HCT116 (cell line): ENCODE measurements at regions of chr3 and their contacts with region 1.

Region 1: GRCh38 chr3:5304789-5305683 is 117.5 kb downstream of the EDEM1 start:
- DNase-seq: peak; percentile 31
- ATAC-seq: peak; percentile 91
- H3K4me3 ChIP-seq: no peak overlapping the region
- H3K27ac ChIP-seq: no peak overlapping the region
- H3K4me1 ChIP-seq: no peaks in the 10 kb centered on the region
- H3K27me3 ChIP-seq: peaks cover 13% of the 10 kb centered on the region; the same call in 1 of the 2 replicates
- CTCF ChIP-seq: peak; percentile 50 to 85 (median 73); a peak in 5 of 6 replicates
- POLR2A ChIP-seq: no peak
- RAD21 ChIP-seq: peak; percentile 92

Region 2: DNA sequence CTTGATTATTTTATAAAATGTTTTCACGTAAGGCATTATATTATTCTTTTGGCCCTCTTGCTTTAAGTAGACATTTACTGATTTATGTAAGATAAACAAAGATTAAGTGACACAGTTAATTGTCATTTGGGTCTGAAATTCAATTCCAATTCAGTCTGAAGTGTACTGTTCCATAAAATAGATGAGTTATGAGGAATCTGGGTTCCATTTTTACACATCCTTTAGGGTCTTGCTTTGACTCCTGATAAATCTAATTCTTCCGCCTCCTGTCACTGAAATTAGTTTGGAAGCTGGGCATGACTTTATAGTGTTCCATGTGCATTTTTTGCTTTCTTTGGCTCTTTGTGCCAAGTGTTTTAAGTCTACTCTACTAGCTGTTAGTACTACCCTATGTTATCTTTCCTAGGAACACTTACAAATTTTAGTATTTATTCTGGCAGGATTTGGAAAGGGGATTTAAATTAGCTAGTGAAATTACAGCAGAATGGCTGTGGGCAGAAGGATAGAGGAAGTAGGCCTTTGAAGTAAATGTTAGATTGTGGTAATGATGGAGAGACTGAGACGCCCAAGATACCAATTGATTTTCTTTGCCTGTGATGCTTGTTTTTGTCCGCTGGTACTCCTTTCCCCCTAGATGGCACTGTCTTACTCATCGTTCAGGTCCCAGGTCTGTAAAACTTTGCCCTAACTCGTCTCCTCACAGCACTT is 168.7 kb before region 1 on chr3:
- CTCF ChIA-PET with region 1: no interaction called
- POLR2A ChIA-PET with region 1: no interaction called
- RAD21 ChIA-PET with region 1: no interaction called
- intact Hi-C with region 1: no loop called
- DNase-seq: no peak
- ATAC-seq: peak; percentile 81
- H3K4me3 ChIP-seq: no peak overlapping the region
- H3K27ac ChIP-seq: no peak overlapping the region
- H3K4me1 ChIP-seq: peaks cover 3 to 10% of the 10 kb centered on the region in 2 experiments; a peak in 3 of 4 replicates
- H3K27me3 ChIP-seq: no peaks in the 10 kb centered on the region
- CTCF ChIP-seq: peak; percentile 30 to 53 (median 48); a peak in 5 of 6 replicates
- POLR2A ChIP-seq: no peak
- RAD21 ChIP-seq: peak; percentile 62

Region 3: DNA sequence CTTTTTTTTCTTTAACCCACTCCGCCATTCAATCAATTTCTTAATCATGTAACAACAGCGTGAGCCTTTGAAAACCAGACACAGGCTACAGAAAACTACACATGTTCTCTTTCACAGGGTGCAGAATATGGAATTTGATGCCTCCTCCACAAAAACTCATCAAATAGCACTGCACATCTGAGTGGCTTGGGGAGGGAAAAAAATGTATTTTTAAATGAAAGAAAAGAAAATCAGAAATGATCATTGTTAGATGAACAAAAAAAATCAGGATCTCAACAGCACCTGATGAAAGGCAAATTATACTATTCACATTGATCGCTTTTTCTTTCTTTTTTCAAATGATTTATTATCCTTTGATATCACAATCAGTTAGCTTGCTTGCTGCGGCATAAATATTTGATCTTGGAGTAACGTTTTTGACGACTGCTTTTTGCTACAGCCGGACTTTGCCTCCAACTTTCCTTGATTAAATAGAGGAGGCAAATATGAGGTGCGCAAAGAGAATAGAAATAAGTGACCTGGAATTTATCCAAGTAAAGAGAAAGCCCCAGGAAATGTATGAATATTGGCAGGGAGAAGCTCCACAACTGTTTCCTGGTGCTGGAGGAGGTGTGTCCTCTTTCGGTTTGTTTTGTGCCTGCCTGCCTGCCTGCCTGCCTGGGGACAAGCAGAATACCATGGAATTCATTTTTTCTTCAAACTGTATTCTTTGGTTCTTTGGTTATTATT is 54.4 kb before region 1 on chr3:
- CTCF ChIA-PET with region 1: no interaction called
- POLR2A ChIA-PET with region 1: no interaction called
- RAD21 ChIA-PET with region 1: no interaction called
- intact Hi-C with region 1: no loop called
- DNase-seq: no peak
- ATAC-seq: no peak
- H3K4me3 ChIP-seq: no peak overlapping the region
- H3K27ac ChIP-seq: no peak overlapping the region
- H3K4me1 ChIP-seq: no peaks in the 10 kb centered on the region
- H3K27me3 ChIP-seq: no peaks in the 10 kb centered on the region
- CTCF ChIP-seq: no peak
- POLR2A ChIP-seq: no peak
- RAD21 ChIP-seq: no peak

Region 4: DNA sequence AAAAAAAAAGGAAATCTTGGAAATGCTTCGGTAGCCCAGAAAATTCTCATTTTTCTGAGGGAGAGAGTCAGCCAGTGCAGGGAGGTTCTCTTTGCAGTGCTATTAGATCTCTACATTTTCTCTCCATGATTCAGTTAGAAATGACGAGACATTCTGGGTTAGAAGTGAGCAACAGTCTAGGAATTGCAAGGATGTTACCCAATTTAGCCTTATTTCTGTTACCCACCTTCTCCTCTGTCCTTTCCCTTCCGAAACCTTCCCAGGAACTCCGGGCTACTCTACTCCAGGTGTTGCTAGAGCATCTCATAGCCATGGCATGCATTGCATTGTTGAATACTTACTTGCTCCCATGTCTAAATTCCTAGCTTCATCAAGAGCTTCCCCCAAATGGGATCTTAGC is 10.7 kb before region 1 on chr3:
- CTCF ChIA-PET with region 1: no interaction called
- POLR2A ChIA-PET with region 1: no interaction called
- RAD21 ChIA-PET with region 1: no interaction called
- intact Hi-C with region 1: no loop called
- DNase-seq: no peak
- ATAC-seq: no peak
- H3K4me3 ChIP-seq: no peak overlapping the region
- H3K27ac ChIP-seq: no peak overlapping the region
- H3K4me1 ChIP-seq: no peaks in the 10 kb centered on the region
- H3K27me3 ChIP-seq: no peaks in the 10 kb centered on the region
- CTCF ChIP-seq: no peak
- POLR2A ChIP-seq: no peak
- RAD21 ChIP-seq: no peak

Region 5: GRCh38 chr3:5568458-5568857 is 263.4 kb after region 1 on chr3:
- CTCF ChIA-PET with region 1: no interaction called
- POLR2A ChIA-PET with region 1: no interaction called
- RAD21 ChIA-PET with region 1: no interaction called
- intact Hi-C with region 1: loop called (anchors 5 kb)
- DNase-seq: peak; percentile 34
- ATAC-seq: peak; percentile 84
- H3K4me3 ChIP-seq: no peak overlapping the region
- H3K27ac ChIP-seq: no peak overlapping the region
- H3K4me1 ChIP-seq: no peaks in the 10 kb centered on the region
- H3K27me3 ChIP-seq: peaks cover 3% of the 10 kb centered on the region; the same call in 1 of the 2 replicates
- CTCF ChIP-seq: peak; percentile 38 to 64 (median 53); a peak in 5 of 6 replicates
- POLR2A ChIP-seq: no peak
- RAD21 ChIP-seq: peak; percentile 75

Region 6: GRCh38 chr3:5731094-5731493 is 426.1 kb after region 1 on chr3:
- CTCF ChIA-PET with region 1: no interaction called
- POLR2A ChIA-PET with region 1: no interaction called
- RAD21 ChIA-PET with region 1: no interaction called
- intact Hi-C with region 1: loop called (anchors 2 kb)
- DNase-seq: peak; percentile 12
- ATAC-seq: peak; percentile 73
- H3K4me3 ChIP-seq: no peak overlapping the region
- H3K27ac ChIP-seq: no peak overlapping the region
- H3K4me1 ChIP-seq: no peaks in the 10 kb centered on the region
- H3K27me3 ChIP-seq: no peaks in the 10 kb centered on the region
- CTCF ChIP-seq: peak; percentile 56 to 70 (median 61); a peak in 5 of 6 replicates
- POLR2A ChIP-seq: no peak
- RAD21 ChIP-seq: peak; percentile 81

Region 7: DNA sequence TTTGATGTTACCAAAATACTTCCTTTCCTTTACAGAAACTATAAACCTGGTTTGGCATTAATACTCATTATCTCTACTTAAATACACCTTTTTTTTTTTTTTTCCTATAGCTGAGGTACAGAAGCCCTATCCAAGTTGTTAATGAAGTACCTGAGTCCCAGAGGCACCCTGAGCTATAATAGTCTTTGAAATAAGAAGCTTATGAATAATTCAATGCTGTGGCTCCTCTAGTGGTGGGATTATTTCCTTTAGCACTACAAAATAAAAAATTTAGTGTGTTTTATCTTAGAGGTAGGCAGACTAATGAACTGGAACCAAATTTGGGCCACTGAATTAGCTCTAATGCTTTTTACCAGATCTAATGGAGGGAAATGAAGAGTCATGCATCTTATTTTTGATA is 494.4 kb after region 1 on chr3:
- CTCF ChIA-PET with region 1: no interaction called
- POLR2A ChIA-PET with region 1: no interaction called
- RAD21 ChIA-PET with region 1: no interaction called
- intact Hi-C with region 1: loop called (anchors 5 kb)
- DNase-seq: no peak
- ATAC-seq: peak; percentile 44; the same call in 1 of the 2 replicates
- H3K4me3 ChIP-seq: no peak overlapping the region
- H3K27ac ChIP-seq: no peak overlapping the region
- H3K4me1 ChIP-seq: peaks cover 3 to 8% of the 10 kb centered on the region in 2 experiments; a peak in 2 of 4 replicates
- H3K27me3 ChIP-seq: no peaks in the 10 kb centered on the region
- CTCF ChIP-seq: peak; percentile 15 to 53 (median 24); a peak in 3 of 6 replicates
- POLR2A ChIP-seq: no peak
- RAD21 ChIP-seq: peak; percentile 31; the same call in 1 of the 2 replicates

Region 8: DNA sequence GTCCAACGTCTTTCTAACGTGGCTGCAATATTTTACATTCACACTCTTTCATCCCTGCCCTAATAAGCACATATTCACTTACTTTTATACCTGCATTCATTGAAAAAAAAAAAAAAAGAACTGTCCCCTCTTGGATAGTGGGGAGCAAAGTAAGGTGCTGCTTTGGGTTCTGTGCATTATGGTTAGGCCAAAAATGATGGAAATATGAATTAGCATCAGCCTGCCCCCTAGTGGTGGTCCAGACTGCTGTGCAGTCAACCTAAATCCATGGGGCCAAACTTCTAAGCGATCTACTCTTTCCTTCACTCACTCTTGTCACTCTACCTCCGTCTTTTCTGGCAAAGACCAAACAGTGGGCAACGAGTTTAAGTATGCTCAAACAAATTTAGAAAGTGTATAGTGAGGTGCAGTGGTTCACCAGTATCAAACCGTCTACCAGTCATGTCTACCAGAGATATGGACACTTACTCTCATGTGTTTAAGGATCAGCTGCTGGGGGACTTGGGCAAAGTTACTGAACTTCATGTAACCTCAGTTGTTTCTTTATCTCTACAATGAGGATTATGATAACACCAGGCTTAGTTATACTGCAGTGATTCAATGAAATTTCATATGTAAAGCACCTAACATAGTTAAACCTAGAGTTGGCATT is 1494.4 kb after region 1 on chr3:
- CTCF ChIA-PET with region 1: no interaction called
- POLR2A ChIA-PET with region 1: no interaction called
- RAD21 ChIA-PET with region 1: no interaction called
- intact Hi-C with region 1: loop called (anchors 1 kb)
- DNase-seq: peak; percentile 19
- ATAC-seq: peak; percentile 74; the same call in 1 of the 2 replicates
- H3K4me3 ChIP-seq: no peak overlapping the region
- H3K27ac ChIP-seq: no peak overlapping the region
- H3K4me1 ChIP-seq: no peaks in the 10 kb centered on the region
- H3K27me3 ChIP-seq: no peaks in the 10 kb centered on the region
- CTCF ChIP-seq: peak; percentile 27 to 81 (median 80); a peak in 5 of 6 replicates
- POLR2A ChIP-seq: no peak
- RAD21 ChIP-seq: peak; percentile 62

Region 9: GRCh38 chr3:7144696-7145308 is 1839.8 kb after region 1 on chr3:
- CTCF ChIA-PET with region 1: no interaction called
- POLR2A ChIA-PET with region 1: no interaction called
- RAD21 ChIA-PET with region 1: no interaction called
- intact Hi-C with region 1: loop called (anchors 10 kb)
- DNase-seq: peak; percentile 31
- ATAC-seq: peak; percentile 79
- H3K4me3 ChIP-seq: no peak overlapping the region
- H3K27ac ChIP-seq: no peak overlapping the region
- H3K4me1 ChIP-seq: no peaks in the 10 kb centered on the region
- H3K27me3 ChIP-seq: no peaks in the 10 kb centered on the region
- CTCF ChIP-seq: peak; percentile 37 to 81 (median 78); a peak in 5 of 6 replicates
- POLR2A ChIP-seq: no peak
- RAD21 ChIP-seq: peak; percentile 50